ENCODE measurements at regions of chr5 and their contacts with region 1.

Region 1: DNA sequence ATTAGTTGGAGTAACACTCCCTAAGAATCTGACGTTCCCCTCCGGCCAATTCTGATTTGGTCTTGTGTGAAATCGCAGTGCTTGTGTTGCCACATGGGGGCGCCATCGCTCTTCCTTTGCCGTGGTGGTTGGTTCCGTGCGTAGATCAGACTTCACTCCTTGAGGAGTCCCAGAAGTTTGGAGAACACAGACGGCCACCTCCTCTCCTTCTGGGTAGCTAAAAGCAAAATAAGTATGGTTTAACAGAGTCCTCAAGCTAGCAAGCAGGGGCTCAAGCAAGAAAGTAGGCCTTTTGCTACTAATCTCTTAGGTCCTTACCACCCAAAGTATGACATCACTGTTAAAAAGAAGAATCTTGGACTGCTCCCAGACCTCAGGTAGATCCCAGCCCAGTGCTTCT is 59.5 kb downstream of the HSPA4 start:
- DNase-seq: peak; percentile 68
- ATAC-seq: peak; percentile 89
- H3K4me3 ChIP-seq: no peak overlapping the region
- H3K27ac ChIP-seq: no peak overlapping the region
- H3K4me1 ChIP-seq: peaks cover 0 to 6% of the 10 kb centered on the region in 2 experiments; a peak in 1 of 4 replicates
- H3K27me3 ChIP-seq: no peaks in the 10 kb centered on the region
- CTCF ChIP-seq: peak; percentile 92 to 97 (median 93)
- POLR2A ChIP-seq: no peak
- RAD21 ChIP-seq: peak; percentile 99

Region 2: DNA sequence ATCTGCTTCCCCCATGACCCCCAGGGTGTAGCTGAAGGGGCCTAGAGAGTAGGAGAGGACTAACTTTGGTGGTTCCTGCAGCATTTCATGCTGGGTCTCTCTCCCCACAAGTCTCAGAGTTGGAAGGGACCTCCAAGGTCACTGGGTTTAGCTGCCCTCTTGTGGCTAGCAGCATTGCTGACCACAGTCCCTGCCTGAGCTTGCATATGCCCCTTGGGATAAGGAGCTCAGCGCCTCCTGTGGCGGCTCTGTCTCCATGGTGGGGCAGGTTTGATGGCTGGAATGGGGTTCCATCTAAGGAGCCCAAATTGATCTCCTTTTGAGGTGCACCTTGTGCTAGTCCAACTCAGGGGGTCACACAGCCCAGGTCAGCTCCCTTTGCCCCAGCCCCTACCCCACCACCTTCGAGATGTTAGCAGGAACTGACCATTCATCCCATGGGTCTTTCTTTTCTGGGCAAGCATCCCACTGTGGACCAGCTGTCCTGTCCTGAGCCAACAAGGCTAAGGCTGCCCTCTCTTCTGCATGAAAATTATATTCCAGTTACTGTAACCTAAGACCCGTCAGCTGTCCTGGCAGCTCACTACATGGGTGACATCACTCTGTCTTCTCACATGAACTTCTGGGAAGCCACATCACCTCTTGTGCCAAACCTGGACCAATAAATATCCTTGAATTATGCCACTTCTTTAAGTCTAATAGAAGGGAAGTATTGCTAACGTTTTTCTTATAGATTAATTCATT is 136.8 kb after region 1 on chr5:
- CTCF ChIA-PET with region 1: interaction called, 36 read pairs
- POLR2A ChIA-PET with region 1: interaction called, 3 read pairs
- RAD21 ChIA-PET with region 1: interaction called, 4 read pairs
- intact Hi-C with region 1: loop called (anchors 1 kb)
- DNase-seq: peak; percentile 60
- ATAC-seq: peak; percentile 57
- H3K4me3 ChIP-seq: no peak overlapping the region
- H3K27ac ChIP-seq: no peak overlapping the region
- H3K4me1 ChIP-seq: peaks cover 27 to 58% of the 10 kb centered on the region in 2 experiments
- H3K27me3 ChIP-seq: no peaks in the 10 kb centered on the region
- CTCF ChIP-seq: peak in 2 of 3 experiments; percentile 69 to 89; a peak in 4 of 6 replicates
- POLR2A ChIP-seq: no peak
- RAD21 ChIP-seq: no peak

Region 3: DNA sequence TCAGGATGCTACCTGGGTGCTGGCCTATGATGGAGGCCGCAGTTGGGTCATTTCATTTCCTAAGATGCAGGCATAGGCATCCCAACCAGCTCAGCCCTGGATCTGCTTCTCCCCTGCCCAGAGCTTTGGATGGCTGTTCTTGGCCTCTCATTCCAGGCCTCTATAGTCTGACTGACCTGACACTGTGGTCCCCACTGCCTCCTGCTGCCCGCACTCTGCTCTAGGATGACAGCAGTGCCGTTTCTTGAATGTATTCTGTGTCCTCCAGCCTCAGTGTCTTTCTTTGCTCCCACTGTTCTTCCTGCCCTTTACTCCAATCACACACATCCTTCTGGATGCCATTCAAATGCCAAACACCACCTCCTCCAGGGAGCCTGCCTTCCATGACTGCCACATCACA is 176.2 kb after region 1 on chr5:
- CTCF ChIA-PET with region 1: interaction called, 9 read pairs
- POLR2A ChIA-PET with region 1: no interaction called
- RAD21 ChIA-PET with region 1: no interaction called
- intact Hi-C with region 1: loop called (anchors 1 kb)
- DNase-seq: peak; percentile 28
- ATAC-seq: peak; percentile 66
- H3K4me3 ChIP-seq: no peak overlapping the region
- H3K27ac ChIP-seq: no peak overlapping the region
- H3K4me1 ChIP-seq: peaks cover 18 to 44% of the 10 kb centered on the region in 2 experiments
- H3K27me3 ChIP-seq: no peaks in the 10 kb centered on the region
- CTCF ChIP-seq: peak; percentile 62 to 79 (median 78)
- POLR2A ChIP-seq: no peak
- RAD21 ChIP-seq: peak; percentile 85

Region 4: DNA sequence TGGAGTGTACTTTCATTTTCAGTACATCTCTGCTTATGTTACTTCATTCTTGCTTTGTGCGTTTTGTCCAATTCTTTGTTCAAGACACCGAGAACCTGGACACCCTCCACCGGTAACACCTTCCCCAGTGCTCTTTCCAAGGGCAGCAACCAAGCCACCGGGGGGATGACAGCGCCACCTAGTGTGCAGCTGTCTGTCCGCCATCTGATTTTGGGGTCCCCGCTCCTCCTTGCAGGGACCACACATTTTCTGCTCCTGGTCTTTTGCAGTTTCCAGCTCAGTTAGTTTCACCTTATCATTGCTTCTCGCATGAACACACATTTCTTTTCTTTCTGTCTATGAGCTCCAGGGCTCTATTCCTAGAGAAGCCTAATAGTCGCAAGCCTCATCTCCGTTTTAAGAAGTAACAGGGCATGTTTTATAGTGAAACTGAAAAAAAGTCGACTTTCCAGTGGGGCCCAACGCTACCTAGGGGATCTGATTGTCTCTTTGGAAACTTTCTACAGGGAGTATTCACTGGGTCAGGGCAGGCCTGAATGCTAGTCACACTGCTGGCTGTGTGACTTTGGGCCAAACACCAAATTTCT is 349.0 kb after region 1 on chr5:
- CTCF ChIA-PET with region 1: no interaction called
- POLR2A ChIA-PET with region 1: no interaction called
- RAD21 ChIA-PET with region 1: no interaction called
- intact Hi-C with region 1: loop called (anchors 1 kb)
- DNase-seq: peak; percentile 19
- ATAC-seq: peak; percentile 93
- H3K4me3 ChIP-seq: no peak overlapping the region
- H3K27ac ChIP-seq: no peak overlapping the region
- H3K4me1 ChIP-seq: no peaks in the 10 kb centered on the region
- H3K27me3 ChIP-seq: 0 out of 2 replicates have a peak, but pooled peaks cover 3% of the 10 kb centered on the region
- CTCF ChIP-seq: peak; percentile 79 to 98 (median 96)
- POLR2A ChIP-seq: no peak
- RAD21 ChIP-seq: peak; percentile 88

Region 5: DNA sequence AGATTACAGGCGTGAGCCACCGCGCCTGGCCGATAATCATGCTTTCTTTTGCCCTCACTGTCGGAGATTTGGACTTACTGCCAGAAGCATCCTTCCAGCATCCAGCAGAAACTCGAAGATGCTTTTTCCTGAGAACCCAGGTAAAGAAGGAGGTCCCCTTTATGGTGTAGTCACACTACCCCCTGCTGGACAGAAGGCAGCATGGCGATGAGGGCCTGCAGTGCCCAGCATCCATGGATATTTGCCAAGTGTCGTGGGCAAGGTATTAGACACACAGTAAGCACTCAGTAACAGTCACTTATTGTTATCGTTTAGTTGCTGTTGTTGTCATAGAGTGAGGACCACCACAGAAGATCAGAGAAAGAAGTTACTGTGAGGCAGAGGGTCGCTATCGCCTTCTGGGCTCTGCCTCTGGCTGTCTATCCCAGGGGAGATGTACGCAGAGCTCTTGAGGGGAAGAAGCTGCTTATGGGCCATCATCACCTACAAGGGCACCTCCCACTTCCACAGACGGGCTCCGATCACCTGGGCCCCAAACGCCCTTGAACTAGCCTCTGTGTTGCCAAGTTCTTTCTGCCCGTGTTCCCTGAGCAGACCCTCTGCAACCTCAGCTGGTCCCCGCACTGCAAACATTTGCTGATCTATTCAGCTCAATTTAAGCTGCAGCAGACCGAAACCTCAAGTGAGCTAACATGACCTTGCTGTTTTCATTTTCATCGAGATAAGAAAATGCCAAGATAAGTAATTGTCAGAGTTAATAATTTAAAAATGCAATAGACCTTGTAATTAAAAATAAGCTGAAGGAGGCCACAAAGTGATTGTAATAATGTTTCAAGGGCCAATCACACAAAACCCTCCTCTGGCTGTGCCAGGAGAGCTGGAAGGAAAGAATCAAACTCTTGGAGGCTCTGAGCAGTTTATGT is 833.2 kb after region 1 on chr5:
- CTCF ChIA-PET with region 1: interaction called, 3 read pairs
- POLR2A ChIA-PET with region 1: no interaction called
- RAD21 ChIA-PET with region 1: no interaction called
- intact Hi-C with region 1: loop called (anchors 1 kb)
- DNase-seq: peak; percentile 46
- ATAC-seq: peak; percentile 93
- H3K4me3 ChIP-seq: no peak overlapping the region
- H3K27ac ChIP-seq: no peak overlapping the region
- H3K4me1 ChIP-seq: no peaks in the 10 kb centered on the region
- H3K27me3 ChIP-seq: no peaks in the 10 kb centered on the region
- CTCF ChIP-seq: peak; percentile 54 to 86 (median 84); a peak in 5 of 6 replicates
- POLR2A ChIP-seq: no peak
- RAD21 ChIP-seq: peak; percentile 85

Measured in HCT116 (cell line).